Heart right ventricle (tissue), 16 donors: ENCODE measurements at regions of chr14 and their contacts with region 1.

Region 1: DNA sequence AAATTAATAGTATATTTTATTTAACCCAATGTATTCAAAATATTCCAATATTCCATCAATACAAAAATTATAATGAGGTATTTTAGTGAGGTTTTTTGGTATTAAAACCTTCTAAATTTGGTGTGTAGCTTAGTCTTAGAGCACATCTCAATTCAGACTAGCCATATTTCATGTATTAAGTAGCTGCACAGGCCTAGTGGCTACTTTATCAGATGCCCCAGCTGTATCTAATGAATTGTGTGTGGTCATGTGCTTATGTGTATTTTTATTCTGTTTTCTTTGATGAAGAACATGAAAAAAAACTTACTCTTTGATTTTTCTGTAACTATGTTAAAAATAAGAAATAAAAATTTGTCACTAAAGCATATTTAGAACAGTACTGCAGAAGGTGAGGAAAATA is 13.2 kb downstream of the ACTR10 start:
- DNase-seq: no peak
- ATAC-seq: no peak
- H3K4me3 ChIP-seq: no peak overlapping the region
- H3K27ac ChIP-seq: no peak overlapping the region
- H3K4me1 ChIP-seq: no peaks in the 10 kb centered on the region
- H3K27me3 ChIP-seq: no peaks in the 10 kb centered on the region
- CTCF ChIP-seq: no peak

Region 2: GRCh38 chr14:57785058-57785457 is 428.1 kb before region 1 on chr14:
- intact Hi-C with region 1: no loop called
- DNase-seq: no peak
- ATAC-seq: no peak
- H3K4me3 ChIP-seq: no peak overlapping the region
- H3K27ac ChIP-seq: no peak overlapping the region
- H3K4me1 ChIP-seq: no peaks in the 10 kb centered on the region
- H3K27me3 ChIP-seq: no peaks in the 10 kb centered on the region
- CTCF ChIP-seq: no peak

Region 3: DNA sequence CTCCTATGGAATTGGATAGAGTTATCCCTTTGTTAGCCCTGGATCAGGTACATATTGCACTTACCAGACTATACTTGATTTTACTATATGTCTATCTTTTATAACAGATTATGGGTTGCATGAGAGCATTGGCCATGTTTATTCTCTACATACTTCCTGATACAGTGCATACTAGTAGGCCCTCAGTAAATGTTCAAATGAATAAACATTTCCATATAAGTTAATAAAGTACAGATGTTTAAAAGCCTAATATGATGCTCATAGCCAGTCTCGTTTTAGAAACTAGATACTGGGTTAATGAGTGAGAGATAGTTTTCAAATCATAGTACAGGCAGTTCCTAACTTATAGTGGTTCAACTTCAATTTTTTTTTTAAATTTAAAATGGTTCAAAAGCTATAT is 143.1 kb after region 1 on chr14:
- intact Hi-C with region 1: loop called in 1 of 10 experiments (anchors 5 kb)
- DNase-seq: no peak
- ATAC-seq: no peak
- H3K4me3 ChIP-seq: no peak overlapping the region
- H3K27ac ChIP-seq: no peak overlapping the region
- H3K4me1 ChIP-seq: peaks cover 0 to 28% (median 4%) of the 10 kb centered on the region in 9 donors
- H3K27me3 ChIP-seq: no peaks in the 10 kb centered on the region
- CTCF ChIP-seq: no peak